Naive thymus-derived CD4-positive, alpha-beta T cell (primary cell): ENCODE measurements at regions of chr2 and their contacts with region 1.

Region 1: GRCh38 chr2:239239607-239240413 is 161.0 kb downstream of the HDAC4 start:
- DNase-seq: peak in 1 of 9 donors; percentile 13
- ATAC-seq: no peak
- H3K4me3 ChIP-seq: no peak overlapping the region
- H3K4me3 Mint-ChIP-seq: no peak overlapping the region
- H3K27ac ChIP-seq: no peak overlapping the region
- H3K27ac Mint-ChIP-seq: peak overlapping the region in 2 of 9 donors; percentile 31 to 55
- H3K4me1 ChIP-seq: peaks cover 0 to 6% of the 10 kb centered on the region in 2 donors
- H3K4me1 Mint-ChIP-seq: peaks cover 33 to 82% (median 65%) of the 10 kb centered on the region in 7 donors
- H3K27me3 ChIP-seq: no peaks in the 10 kb centered on the region
- H3K27me3 Mint-ChIP-seq: peaks cover 0 to 2% (median 0%) of the 10 kb centered on the region in 5 donors

Region 2: GRCh38 chr2:239181907-239182581 is 57.8 kb before region 1 on chr2:
- CTCF ChIA-PET with region 1: no interaction called
- POLR2A ChIA-PET with region 1: no interaction called
- intact Hi-C with region 1: loop called in 1 of 2 experiments (anchors 10 kb)
- DNase-seq: no peak
- ATAC-seq: no peak
- H3K4me3 ChIP-seq: no peak overlapping the region
- H3K4me3 Mint-ChIP-seq: no peak overlapping the region
- H3K27ac ChIP-seq: no peak overlapping the region
- H3K27ac Mint-ChIP-seq: peak overlapping the region in 3 of 9 donors; percentile 18 to 70 (median 43)
- H3K4me1 ChIP-seq: no peaks in the 10 kb centered on the region
- H3K4me1 Mint-ChIP-seq: peaks cover 0 to 4% (median 0%) of the 10 kb centered on the region in 7 donors
- H3K27me3 ChIP-seq: no peaks in the 10 kb centered on the region
- H3K27me3 Mint-ChIP-seq: no peaks in the 10 kb centered on the region

Region 3: GRCh38 chr2:239252801-239253200 is 13.0 kb after region 1 on chr2:
- CTCF ChIA-PET with region 1: interaction called, 3 read pairs
- POLR2A ChIA-PET with region 1: interaction called, 14 read pairs
- intact Hi-C with region 1: no loop called
- DNase-seq: no peak
- ATAC-seq: peak; percentile 71
- H3K4me3 ChIP-seq: peak overlapping the region; percentile 18
- H3K4me3 Mint-ChIP-seq: peak overlapping the region in 9 of 10 donors; percentile 82 to 93 (median 87)
- H3K27ac ChIP-seq: peak overlapping the region; percentile 23
- H3K27ac Mint-ChIP-seq: peak overlapping the region in 8 of 9 donors; percentile 61 to 92 (median 81)
- H3K4me1 ChIP-seq: peaks cover 5 to 55% of the 10 kb centered on the region in 2 donors
- H3K4me1 Mint-ChIP-seq: peaks cover 47 to 92% (median 74%) of the 10 kb centered on the region in 7 donors
- H3K27me3 ChIP-seq: no peaks in the 10 kb centered on the region
- H3K27me3 Mint-ChIP-seq: peaks cover 0 to 4% (median 0%) of the 10 kb centered on the region in 5 donors